Ovary (tissue), 10 donors: ENCODE measurements at regions of chr17 and their contacts with region 1.

Region 1: GRCh38 chr17:1267471-1267947 is 2.7 kb upstream of the BHLHA9 start:
- DNase-seq: peak in 3 of 5 donors; percentile 36 to 54 (median 40)
- H3K4me3 ChIP-seq: peak overlapping the region; percentile 61
- H3K27ac ChIP-seq: peak overlapping the region; percentile 66 to 68
- H3K4me1 ChIP-seq: no peaks in the 10 kb centered on the region
- H3K27me3 ChIP-seq: no peaks in the 10 kb centered on the region
- CTCF ChIP-seq: no peak
- EP300 ChIP-seq: no peak
- POLR2A ChIP-seq: no peak

Region 2: DNA sequence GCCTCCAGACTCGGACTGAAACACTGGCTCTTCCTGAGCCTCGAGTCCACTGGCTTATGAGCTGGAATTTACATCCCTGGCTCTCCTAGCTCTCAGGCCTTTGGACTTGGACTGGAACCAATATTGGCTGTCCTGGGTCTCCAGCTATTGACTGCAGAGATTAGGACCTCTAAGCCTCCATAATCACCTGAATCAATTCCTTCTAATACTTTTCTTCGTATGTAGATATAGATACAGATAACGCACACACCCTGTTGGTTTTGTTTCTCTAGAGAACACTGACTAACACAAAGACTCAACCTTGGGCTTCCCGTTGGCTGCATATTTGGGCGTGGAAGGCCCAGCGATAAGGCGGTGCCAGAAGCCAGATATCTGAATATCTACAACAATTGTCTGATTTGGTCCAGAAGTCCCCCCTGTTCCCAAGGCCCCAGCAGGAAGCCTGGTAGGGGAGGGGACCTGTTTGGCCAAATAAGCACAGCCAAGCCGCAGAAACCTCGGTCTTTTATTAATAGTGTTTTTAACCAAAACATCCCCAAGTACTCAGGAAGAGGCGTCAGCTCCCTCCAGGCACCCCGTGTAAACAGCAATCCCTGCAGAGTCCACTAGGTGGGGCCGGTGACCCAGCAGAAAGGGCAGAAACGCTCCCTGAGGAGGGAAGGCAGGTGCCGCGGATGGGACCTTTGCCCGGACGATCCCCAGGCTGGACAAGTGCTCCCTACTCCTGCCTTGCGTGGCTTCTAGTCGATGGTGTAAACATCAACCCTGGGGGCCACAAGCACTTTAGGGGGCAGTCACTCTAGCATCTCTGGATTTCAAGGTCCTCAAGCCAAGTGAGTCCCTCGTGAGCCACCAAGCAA is 144.7 kb before region 1 on chr17:
- intact Hi-C with region 1: loop called in 1 of 4 experiments (anchors 5 kb)
- DNase-seq: peak; percentile 84 to 93 (median 91)
- H3K4me3 ChIP-seq: no peak overlapping the region
- H3K27ac ChIP-seq: peak overlapping the region in 1 of 2 donors; percentile 47
- H3K4me1 ChIP-seq: peaks cover 9% of the 10 kb centered on the region
- H3K27me3 ChIP-seq: no peaks in the 10 kb centered on the region
- CTCF ChIP-seq: peak; percentile 92 to 94 (median 93)
- EP300 ChIP-seq: no peak
- POLR2A ChIP-seq: no peak

Region 3: DNA sequence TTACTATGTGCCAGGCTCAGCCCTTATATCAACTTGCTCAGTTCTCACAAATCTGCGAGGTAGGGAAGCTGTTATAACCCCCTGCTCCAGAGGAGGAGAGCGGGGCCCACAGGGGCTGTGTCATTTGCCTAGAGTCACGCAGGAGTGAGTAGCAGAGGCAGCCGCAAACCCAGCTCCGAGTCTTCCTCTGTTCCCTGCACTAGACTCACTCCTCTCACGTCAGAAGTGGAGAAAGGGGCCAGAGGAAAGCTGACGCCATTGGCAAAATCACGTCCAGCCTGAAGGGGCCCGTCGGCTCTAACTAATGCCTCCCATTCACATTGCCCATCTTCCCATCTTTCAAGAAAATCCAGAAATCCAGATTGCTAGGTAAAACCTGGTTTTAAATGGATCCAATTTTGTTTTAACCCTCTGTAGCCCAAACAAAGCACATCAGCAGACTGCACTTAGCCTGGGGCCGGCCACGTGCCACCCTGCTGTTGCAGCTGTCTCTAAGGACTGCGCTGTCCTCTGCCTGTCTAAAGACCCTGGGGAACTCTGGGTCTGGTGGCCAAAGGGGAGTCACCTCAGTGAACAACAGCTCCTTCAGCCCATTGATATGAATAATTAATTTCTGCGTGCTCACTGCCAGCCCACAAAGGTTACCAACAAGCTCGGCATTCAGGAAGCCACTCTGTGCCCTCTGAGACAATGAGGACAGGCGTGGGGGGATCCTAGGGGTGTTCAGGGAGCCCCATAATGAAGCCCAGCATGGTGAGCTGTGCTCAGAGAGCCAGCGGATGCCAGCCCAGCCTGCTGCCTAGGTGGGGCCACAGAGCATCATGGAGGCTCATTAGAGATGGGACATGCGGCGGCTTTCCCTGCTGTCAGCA is 51.1 kb before region 1 on chr17:
- intact Hi-C with region 1: no loop called
- DNase-seq: no peak
- H3K4me3 ChIP-seq: no peak overlapping the region
- H3K27ac ChIP-seq: no peak overlapping the region
- H3K4me1 ChIP-seq: no peaks in the 10 kb centered on the region
- H3K27me3 ChIP-seq: no peaks in the 10 kb centered on the region
- CTCF ChIP-seq: no peak
- EP300 ChIP-seq: no peak
- POLR2A ChIP-seq: no peak